PC-9 (cell line): ENCODE measurements at regions of chr3 and their contacts with region 1.

Region 1: DNA sequence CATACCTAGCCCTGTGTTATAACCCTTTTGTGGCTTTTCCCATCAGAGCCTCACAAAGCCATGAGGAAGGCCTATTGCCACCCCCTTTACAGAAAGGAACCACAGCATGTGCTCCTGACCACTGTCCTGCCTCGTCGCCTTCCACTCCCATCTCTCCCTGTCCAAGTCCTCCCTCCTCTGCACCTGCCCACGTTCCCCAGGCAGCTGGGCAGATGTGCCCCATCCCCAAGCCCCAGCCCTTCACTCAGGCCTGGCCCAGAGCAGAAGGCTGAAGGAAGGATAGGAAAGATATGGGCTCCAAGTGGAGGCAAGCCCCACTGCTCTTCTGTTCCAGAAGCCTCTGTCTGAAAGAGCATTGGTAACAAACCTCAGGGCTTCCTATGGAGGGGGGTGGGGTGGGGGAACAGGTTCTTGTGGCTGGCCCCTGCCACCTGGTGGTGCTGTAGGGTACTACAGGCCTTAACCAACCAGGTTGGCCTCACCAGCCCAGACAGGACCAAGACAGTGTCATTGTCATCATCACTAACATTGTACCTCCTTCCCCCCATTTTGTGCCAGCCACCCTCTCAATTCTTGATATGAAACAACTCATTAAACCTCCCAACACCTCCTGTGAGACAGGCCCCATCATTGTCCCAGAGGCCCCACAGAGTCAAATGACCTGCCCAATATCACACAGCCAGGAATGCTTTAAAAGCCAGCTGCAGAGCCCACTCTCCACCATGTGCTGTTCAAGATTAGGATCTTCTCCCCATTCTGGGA is 10.0 kb downstream of the POC1A start:
- DNase-seq: peak in 1 of 2 experiments; percentile 73
- H3K4me3 ChIP-seq: no peak overlapping the region
- H3K27ac ChIP-seq: no peak overlapping the region
- H3K4me1 ChIP-seq: no peaks in the 10 kb centered on the region
- H3K27me3 ChIP-seq: no peaks in the 10 kb centered on the region
- CTCF ChIP-seq: peak; percentile 93

Region 2: GRCh38 chr3:51955893-51956770 is 188.1 kb before region 1 on chr3:
- CTCF ChIA-PET with region 1: interaction called, 10 read pairs
- POLR2A ChIA-PET with region 1: no interaction called
- intact Hi-C with region 1: no loop called
- DNase-seq: peak in 1 of 2 experiments; percentile 63
- H3K4me3 ChIP-seq: peak overlapping the region; percentile 35; the same call in 1 of the 2 replicates
- H3K27ac ChIP-seq: no peak overlapping the region
- H3K4me1 ChIP-seq: peaks cover 4% of the 10 kb centered on the region; the same call in 1 of the 2 replicates
- H3K27me3 ChIP-seq: no peaks in the 10 kb centered on the region; the same call in 1 of the 2 replicates
- CTCF ChIP-seq: peak; percentile 56

Region 3: DNA sequence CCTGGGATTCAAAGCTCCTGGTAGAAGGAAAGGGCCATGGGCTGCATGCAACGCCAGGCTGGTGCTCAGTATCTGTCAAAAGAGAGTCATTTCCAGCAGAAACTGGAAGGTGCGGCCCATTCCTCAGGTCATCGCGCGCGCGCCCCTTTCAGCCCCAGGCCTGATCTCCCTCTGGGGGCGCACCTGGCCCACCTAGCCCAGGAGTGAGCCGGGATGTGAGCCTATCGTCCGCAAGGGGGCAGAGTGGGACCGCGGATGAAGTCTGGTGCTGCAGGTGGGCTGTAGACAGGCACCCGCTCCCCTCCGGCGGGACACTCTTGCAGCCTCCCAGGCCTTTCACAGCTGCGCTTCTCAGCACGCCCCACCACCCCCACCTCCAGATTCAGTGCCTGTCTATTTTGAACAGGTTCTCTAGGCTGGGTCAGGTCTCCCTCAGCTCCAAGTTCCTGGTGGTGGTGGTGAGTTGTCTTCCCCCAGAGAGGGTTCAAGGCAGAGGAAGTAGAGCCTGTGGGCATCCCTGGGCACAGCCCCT is 142.7 kb before region 1 on chr3:
- CTCF ChIA-PET with region 1: no interaction called
- POLR2A ChIA-PET with region 1: interaction called, 7 read pairs
- intact Hi-C with region 1: loop called (anchors 1 kb)
- DNase-seq: peak in 1 of 2 experiments; percentile 73
- H3K4me3 ChIP-seq: no peak overlapping the region
- H3K27ac ChIP-seq: no peak overlapping the region
- H3K4me1 ChIP-seq: peaks cover 13% of the 10 kb centered on the region
- H3K27me3 ChIP-seq: no peaks in the 10 kb centered on the region
- CTCF ChIP-seq: peak; percentile 92

Region 4: GRCh38 chr3:52123106-52123725 is 21.0 kb before region 1 on chr3:
- CTCF ChIA-PET with region 1: no interaction called
- POLR2A ChIA-PET with region 1: interaction called, 4 read pairs
- intact Hi-C with region 1: loop called (anchors 1 kb)
- DNase-seq: peak in 1 of 2 experiments; percentile 71
- H3K4me3 ChIP-seq: no peak overlapping the region
- H3K27ac ChIP-seq: no peak overlapping the region
- H3K4me1 ChIP-seq: peaks cover 7% of the 10 kb centered on the region
- H3K27me3 ChIP-seq: no peaks in the 10 kb centered on the region
- CTCF ChIP-seq: peak; percentile 81